ENCODE measurements at regions of chr1 and their contacts with region 1.

Region 1: GRCh38 chr1:11693917-11694316 is 2.4 kb downstream of the DRAXIN start:
- DNase-seq: no peak
- H3K4me3 ChIP-seq: no peak overlapping the region
- H3K27ac ChIP-seq: no peak overlapping the region
- H3K4me1 ChIP-seq: no peaks in the 10 kb centered on the region
- CTCF ChIP-seq: no peak

Region 2: GRCh38 chr1:11670747-11671146 is 23.2 kb before region 1 on chr1:
- CTCF ChIA-PET with region 1: no interaction called
- POLR2A ChIA-PET with region 1: interaction called, 3 read pairs
- intact Hi-C with region 1: loop called (anchors 2 kb)
- DNase-seq: no peak
- H3K4me3 ChIP-seq: no peak overlapping the region
- H3K27ac ChIP-seq: no peak overlapping the region
- H3K4me1 ChIP-seq: no peaks in the 10 kb centered on the region
- CTCF ChIP-seq: no peak

Region 3: DNA sequence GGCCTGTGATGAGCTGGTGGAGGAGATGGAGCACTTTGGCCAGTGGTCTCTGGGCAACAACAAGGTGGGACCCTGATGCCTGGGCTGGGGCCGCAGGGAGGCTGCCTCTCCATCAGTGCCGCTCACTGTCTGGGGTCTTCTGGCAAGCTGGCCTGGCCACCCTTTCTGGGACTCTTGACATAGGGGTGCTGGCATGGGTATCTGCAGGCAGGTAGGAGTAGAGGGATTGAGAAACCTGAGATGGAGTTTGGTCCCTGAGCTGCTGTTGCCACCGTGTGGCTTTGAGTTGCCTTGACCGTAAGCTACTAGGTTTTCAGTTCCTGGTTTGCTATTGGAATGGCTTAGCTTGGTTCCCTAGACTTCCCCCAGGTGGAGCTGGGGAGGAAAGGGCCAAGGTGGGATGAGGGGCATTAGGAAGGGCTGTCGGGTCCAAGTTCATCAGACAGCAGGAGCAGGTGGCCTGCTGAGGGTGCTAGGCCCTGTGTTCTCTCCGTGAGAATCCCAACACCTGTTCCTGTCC is 273.2 kb after region 1 on chr1:
- CTCF ChIA-PET with region 1: no interaction called
- POLR2A ChIA-PET with region 1: no interaction called
- intact Hi-C with region 1: no loop called
- DNase-seq: peak; percentile 83
- H3K4me3 ChIP-seq: no peak overlapping the region
- H3K27ac ChIP-seq: no peak overlapping the region
- H3K4me1 ChIP-seq: no peaks in the 10 kb centered on the region
- CTCF ChIP-seq: peak; percentile 87